ENCODE measurements at regions of chr4 and their contacts with region 1.

Region 1: DNA sequence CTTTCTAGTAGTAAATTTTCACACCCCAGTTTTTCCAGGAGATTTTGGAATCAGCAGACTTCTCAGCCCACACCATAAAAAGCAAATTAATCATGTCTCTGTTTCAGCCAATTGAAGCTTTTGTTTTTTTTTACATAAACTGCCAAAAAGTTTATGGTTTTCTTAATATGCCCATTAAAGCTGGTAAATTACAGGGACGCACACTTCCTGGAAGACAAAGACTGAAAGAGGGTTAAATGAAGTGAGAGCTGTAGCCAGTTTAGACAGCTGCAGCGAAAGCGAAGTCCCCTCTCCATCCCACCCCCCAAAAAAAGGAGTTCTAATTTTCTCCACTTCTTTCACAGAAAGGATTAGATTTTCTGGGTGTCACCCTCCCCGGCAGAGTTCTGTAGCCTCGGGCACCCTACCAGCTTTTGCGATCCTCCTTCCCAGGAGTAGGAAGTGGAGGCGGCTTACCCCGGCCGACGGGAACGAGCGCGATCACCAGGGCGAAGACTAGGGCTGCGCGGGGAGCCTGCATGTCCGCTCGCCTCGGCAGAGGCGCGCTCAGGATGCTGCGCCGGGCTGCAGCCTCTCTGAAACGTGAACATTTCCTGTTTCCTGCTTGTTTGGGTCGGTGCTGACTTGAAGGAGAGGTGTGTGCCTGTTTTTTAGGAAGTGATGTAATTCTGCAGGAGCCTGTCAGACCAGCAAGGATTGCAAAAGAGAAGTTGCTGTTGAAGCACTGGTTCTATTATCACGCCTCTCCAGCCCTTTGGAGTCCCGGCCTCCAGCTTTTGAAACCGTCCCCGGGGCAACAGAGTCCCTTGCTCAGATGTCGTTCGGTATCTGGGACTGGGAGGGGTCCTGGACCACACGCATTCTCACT is at the start of gene TMEM154:
- DNase-seq: no peak
- ATAC-seq: peak; percentile 80
- H3K4me3 ChIP-seq: peak within 1 kb of the TSS; percentile 89
- H3K27ac ChIP-seq: peak within 1 kb of the TSS; percentile 54
- H3K4me1 ChIP-seq: peaks cover 41% of the 10 kb centered on the region
- H3K27me3 ChIP-seq: no peaks in the 10 kb centered on the region
- CTCF ChIP-seq: 0 out of 6 replicates have a peak, but pooled peaks of 1 of the 3 experiments have one; percentile 7
- EP300 ChIP-seq: 0 out of 4 replicates have a peak, but pooled peaks of 1 of the 2 experiments have one; percentile 20
- POLR2A ChIP-seq: peak; percentile 95
- RAD21 ChIP-seq: no peak
- polyA plus RNA-seq, gene TMEM154: 9.3 to 17.6 TPM

Region 2: GRCh38 chr4:152454398-152455011 is 225.1 kb before region 1 on chr4:
- CTCF ChIA-PET with region 1: interaction called, 7 read pairs
- POLR2A ChIA-PET with region 1: no interaction called
- RAD21 ChIA-PET with region 1: interaction called, 10 read pairs
- SMC1A ChIA-PET with region 1: interaction called, 10 read pairs
- in situ Hi-C with region 1: no loop called
- intact Hi-C with region 1: no loop called
- DNase-seq: no peak
- ATAC-seq: peak; percentile 15; the same call in 2 of the 3 replicates
- H3K4me3 ChIP-seq: no peak overlapping the region
- H3K27ac ChIP-seq: no peak overlapping the region
- H3K4me1 ChIP-seq: peaks cover 12% of the 10 kb centered on the region
- H3K27me3 ChIP-seq: no peaks in the 10 kb centered on the region
- CTCF ChIP-seq: peak; percentile 50 to 60 (median 60)
- EP300 ChIP-seq: no peak
- POLR2A ChIP-seq: no peak
- RAD21 ChIP-seq: peak; percentile 65

Region 3: GRCh38 chr4:152663203-152664066 is 16.2 kb before region 1 on chr4:
- CTCF ChIA-PET with region 1: interaction called, 65 read pairs
- POLR2A ChIA-PET with region 1: interaction called, 57 read pairs
- RAD21 ChIA-PET with region 1: interaction called, 85 read pairs
- SMC1A ChIA-PET with region 1: interaction called, 133 read pairs
- in situ Hi-C with region 1: no loop called
- intact Hi-C with region 1: no loop called
- DNase-seq: peak; percentile 75
- ATAC-seq: peak; percentile 78
- H3K4me3 ChIP-seq: peak overlapping the region; percentile 51; the same call in 1 of the 2 replicates
- H3K27ac ChIP-seq: peak overlapping the region; percentile 79
- H3K4me1 ChIP-seq: peaks cover 66% of the 10 kb centered on the region
- H3K27me3 ChIP-seq: no peaks in the 10 kb centered on the region
- CTCF ChIP-seq: no peak
- EP300 ChIP-seq: peak in 1 of 2 experiments; percentile 32; a peak in 1 of 4 replicates
- POLR2A ChIP-seq: no peak
- RAD21 ChIP-seq: no peak

Region 4: GRCh38 chr4:152690706-152691651 is 11.3 kb after region 1 on chr4:
- CTCF ChIA-PET with region 1: interaction called, 30 read pairs
- POLR2A ChIA-PET with region 1: interaction called, 7 read pairs
- RAD21 ChIA-PET with region 1: interaction called, 4 read pairs
- SMC1A ChIA-PET with region 1: interaction called, 20 read pairs
- in situ Hi-C with region 1: no loop called
- intact Hi-C with region 1: no loop called
- DNase-seq: no peak
- ATAC-seq: no peak
- H3K4me3 ChIP-seq: no peak overlapping the region
- H3K27ac ChIP-seq: no peak overlapping the region
- H3K4me1 ChIP-seq: peaks cover 2% of the 10 kb centered on the region
- H3K27me3 ChIP-seq: no peaks in the 10 kb centered on the region; a peak in 1 of 4 replicates
- CTCF ChIP-seq: no peak
- EP300 ChIP-seq: no peak
- POLR2A ChIP-seq: no peak
- RAD21 ChIP-seq: no peak

Region 5: GRCh38 chr4:152696764-152697261 is 17.2 kb after region 1 on chr4:
- CTCF ChIA-PET with region 1: interaction called, 35 read pairs
- POLR2A ChIA-PET with region 1: interaction called, 13 read pairs
- RAD21 ChIA-PET with region 1: interaction called, 45 read pairs
- SMC1A ChIA-PET with region 1: interaction called, 63 read pairs
- in situ Hi-C with region 1: no loop called
- intact Hi-C with region 1: no loop called
- DNase-seq: peak; percentile 98
- ATAC-seq: peak; percentile 97
- H3K4me3 ChIP-seq: peak overlapping the region; percentile 42; the same call in 1 of the 2 replicates
- H3K27ac ChIP-seq: peak overlapping the region; percentile 71
- H3K4me1 ChIP-seq: peaks cover 20% of the 10 kb centered on the region
- H3K27me3 ChIP-seq: no peaks in the 10 kb centered on the region
- CTCF ChIP-seq: no peak
- EP300 ChIP-seq: peak; percentile 85 to 93; a peak in 3 of 4 replicates
- POLR2A ChIP-seq: no peak
- RAD21 ChIP-seq: no peak

Region 6: GRCh38 chr4:152709683-152710438 is 30.2 kb after region 1 on chr4:
- CTCF ChIA-PET with region 1: interaction called, 6 read pairs
- POLR2A ChIA-PET with region 1: interaction called, 6 read pairs
- RAD21 ChIA-PET with region 1: interaction called, 14 read pairs
- SMC1A ChIA-PET with region 1: interaction called, 19 read pairs
- in situ Hi-C with region 1: no loop called
- intact Hi-C with region 1: no loop called
- DNase-seq: peak; percentile 42
- ATAC-seq: peak; percentile 95
- H3K4me3 ChIP-seq: no peak overlapping the region
- H3K27ac ChIP-seq: peak overlapping the region; percentile 45
- H3K4me1 ChIP-seq: peaks cover 11% of the 10 kb centered on the region
- H3K27me3 ChIP-seq: no peaks in the 10 kb centered on the region
- CTCF ChIP-seq: no peak
- EP300 ChIP-seq: no peak; a peak in 1 of 4 replicates
- POLR2A ChIP-seq: no peak
- RAD21 ChIP-seq: no peak

Measured in GM12878 (cell line).